T-cell (primary cell): ENCODE measurements at regions of chr12 and their contacts with region 1.

Region 1: GRCh38 chr12:12786716-12787601 is 1.5 kb downstream of the APOLD1 start:
- DNase-seq: peak; percentile 31 to 86 (median 62)
- ATAC-seq: peak; percentile 91 to 95 (median 92)
- H3K4me3 ChIP-seq: peak overlapping the region; percentile 65 to 76
- H3K4me3 Mint-ChIP-seq: peak overlapping the region; percentile 80 to 84 (median 83)
- H3K27ac ChIP-seq: peak overlapping the region; percentile 79
- H3K27ac Mint-ChIP-seq: peak overlapping the region; percentile 86 to 88
- H3K4me1 ChIP-seq: peaks cover 9 to 20% of the 10 kb centered on the region in 2 experiments
- H3K4me1 Mint-ChIP-seq: peaks cover 17 to 27% (median 26%) of the 10 kb centered on the region in 3 donors
- H3K27me3 ChIP-seq: no peaks in the 10 kb centered on the region
- H3K27me3 Mint-ChIP-seq: no peaks in the 10 kb centered on the region

Region 2: DNA sequence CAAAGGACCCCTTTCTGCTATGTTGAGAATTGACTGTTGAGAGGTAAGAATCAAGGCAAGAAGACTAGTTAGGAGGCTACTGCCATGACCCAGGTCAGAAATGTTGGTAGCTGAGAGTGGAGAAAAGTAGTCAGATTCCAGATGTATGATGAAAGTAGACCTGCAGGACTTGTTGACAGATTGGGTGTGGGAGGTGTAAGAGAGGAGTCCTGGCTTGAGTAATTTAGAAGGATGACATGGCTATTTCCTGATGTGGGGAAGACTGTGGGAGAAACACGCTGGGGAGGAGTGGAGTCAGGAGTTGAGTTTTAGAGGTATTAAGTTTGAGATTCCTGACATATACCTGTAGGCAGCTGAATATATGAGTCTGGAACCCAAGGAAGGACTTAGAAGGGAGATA is 13.4 kb after region 1 on chr12:
- CTCF ChIA-PET with region 1: interaction called, 8 to 9 read pairs
- POLR2A ChIA-PET with region 1: interaction called, 7 to 11 read pairs
- DNase-seq: no peak
- ATAC-seq: no peak
- H3K4me3 ChIP-seq: no peak overlapping the region
- H3K4me3 Mint-ChIP-seq: no peak overlapping the region
- H3K27ac ChIP-seq: no peak overlapping the region
- H3K27ac Mint-ChIP-seq: no peak overlapping the region
- H3K4me1 ChIP-seq: peaks cover 0 to 9% of the 10 kb centered on the region in 2 experiments
- H3K4me1 Mint-ChIP-seq: peaks cover 24 to 35% (median 31%) of the 10 kb centered on the region in 3 donors
- H3K27me3 ChIP-seq: no peaks in the 10 kb centered on the region
- H3K27me3 Mint-ChIP-seq: no peaks in the 10 kb centered on the region

Region 3: DNA sequence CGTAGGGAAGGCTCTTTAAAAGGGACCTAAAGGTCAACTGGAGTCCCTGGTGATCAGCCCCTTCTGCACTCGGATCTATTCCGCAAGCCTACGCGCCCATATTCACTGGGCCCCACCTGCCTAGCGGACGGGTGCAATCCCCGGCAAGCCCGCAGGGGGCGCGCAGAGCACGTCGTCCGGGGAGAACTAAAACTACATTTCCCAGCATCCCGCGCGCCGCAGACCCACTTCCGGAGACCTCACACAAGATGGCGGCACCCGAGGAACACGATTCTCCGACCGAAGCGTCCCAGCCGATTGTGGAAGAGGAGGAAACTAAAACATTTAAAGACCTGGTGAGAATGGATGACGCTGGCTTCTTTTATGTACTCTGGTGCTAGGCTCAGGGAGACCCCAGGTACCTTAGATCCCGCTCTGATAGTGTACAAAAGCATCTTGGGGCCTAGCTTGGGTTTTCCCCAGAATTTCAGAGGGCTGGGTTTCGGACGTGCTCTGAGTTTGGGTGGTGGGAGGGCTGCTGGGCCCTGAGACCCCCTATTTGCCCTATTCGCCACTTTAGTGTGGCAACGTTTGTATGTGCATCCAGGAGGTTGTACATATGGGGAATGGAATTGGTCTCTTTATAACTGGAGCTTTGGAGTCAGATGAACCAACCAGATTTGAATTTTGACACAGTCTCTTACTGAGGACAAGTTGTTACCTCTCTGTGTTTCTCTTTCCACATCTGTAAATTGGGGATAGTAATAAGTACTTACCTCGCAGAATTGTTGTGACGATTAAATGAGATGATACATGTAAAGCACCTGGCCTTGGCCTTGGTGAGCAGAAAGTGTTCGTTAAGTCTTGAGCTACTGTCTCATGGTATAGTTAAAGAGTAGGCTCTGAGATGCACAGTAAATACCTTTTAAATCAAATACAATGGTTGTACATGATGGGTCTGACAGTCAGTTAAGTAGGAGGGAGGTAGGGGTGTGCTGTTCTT is 26.5 kb after region 1 on chr12 and contains the start of gene DDX47:
- CTCF ChIA-PET with region 1: interaction called, 8 to 48 read pairs
- POLR2A ChIA-PET with region 1: interaction called, 3 to 5 read pairs
- DNase-seq: peak; percentile 88 to 98 (median 96)
- ATAC-seq: peak; percentile 81 to 92 (median 83)
- H3K4me3 ChIP-seq: peak within 1 kb of the TSS; percentile 78 to 97
- H3K4me3 Mint-ChIP-seq: peak within 1 kb of the TSS; percentile 88 to 99 (median 91)
- H3K27ac ChIP-seq: peak within 1 kb of the TSS; percentile 77
- H3K27ac Mint-ChIP-seq: peak within 1 kb of the TSS; percentile 83 to 89
- H3K4me1 ChIP-seq: peaks cover 26 to 32% of the 10 kb centered on the region in 2 experiments
- H3K4me1 Mint-ChIP-seq: peaks cover 61 to 74% (median 73%) of the 10 kb centered on the region in 3 donors
- H3K27me3 ChIP-seq: no peaks in the 10 kb centered on the region
- H3K27me3 Mint-ChIP-seq: no peaks in the 10 kb centered on the region
- total RNA-seq, gene DDX47: 60.4 to 141 (median 69.8) TPM

Region 4: DNA sequence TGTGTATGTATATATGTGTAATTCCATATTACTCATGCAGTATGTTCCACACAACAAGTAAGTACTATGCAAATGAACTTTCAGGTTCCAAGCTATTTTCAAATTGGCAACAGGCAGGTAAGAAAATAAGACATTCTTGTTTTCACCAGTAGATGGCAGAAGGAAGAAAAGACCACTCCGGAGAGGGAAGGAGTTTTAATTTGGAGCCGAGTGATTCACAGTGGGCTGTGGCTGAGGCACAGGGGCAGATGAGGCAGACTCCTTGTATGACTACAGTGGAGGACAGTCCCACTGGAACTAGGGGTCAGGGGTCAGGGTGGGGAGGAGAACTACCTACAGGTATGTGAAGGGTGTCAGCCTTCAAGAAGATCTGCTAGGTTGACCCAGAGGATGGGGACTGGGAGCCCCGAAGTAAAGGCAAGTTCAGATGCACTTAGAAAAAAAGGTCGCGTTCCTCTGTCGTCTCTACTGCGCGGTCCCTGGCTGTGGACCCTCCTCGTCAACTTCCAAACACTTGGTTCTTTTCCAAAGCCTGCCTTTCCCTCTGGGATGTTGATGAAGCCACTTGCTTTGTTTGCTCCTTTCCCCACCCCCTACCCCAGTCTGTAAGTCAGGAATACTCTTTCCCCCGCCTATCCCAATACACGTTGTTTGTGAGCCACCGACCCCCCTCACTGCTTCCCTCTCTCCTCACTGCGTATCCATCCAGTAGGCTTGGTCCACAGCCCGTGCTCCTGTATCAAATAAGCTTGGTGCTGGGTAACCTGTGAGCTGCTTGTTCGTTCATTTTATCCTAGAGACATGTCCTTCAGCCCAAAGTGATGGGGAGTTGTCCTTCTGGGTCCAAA is 50.3 kb after region 1 on chr12:
- CTCF ChIA-PET with region 1: interaction called, 3 to 11 read pairs
- POLR2A ChIA-PET with region 1: no interaction called
- DNase-seq: peak in 16 of 35 experiments; percentile 1 to 63 (median 11)
- ATAC-seq: peak; percentile 63 to 75 (median 71)
- H3K4me3 ChIP-seq: no peak overlapping the region
- H3K4me3 Mint-ChIP-seq: peak overlapping the region in 1 of 3 donors; percentile 8
- H3K27ac ChIP-seq: no peak overlapping the region
- H3K27ac Mint-ChIP-seq: peak overlapping the region; percentile 57 to 83
- H3K4me1 ChIP-seq: peaks cover 9 to 16% of the 10 kb centered on the region in 2 experiments
- H3K4me1 Mint-ChIP-seq: peaks cover 26 to 33% (median 28%) of the 10 kb centered on the region in 3 donors
- H3K27me3 ChIP-seq: no peaks in the 10 kb centered on the region
- H3K27me3 Mint-ChIP-seq: no peaks in the 10 kb centered on the region